AG04450 (cell line): ENCODE measurements at regions of chr6 and their contacts with region 1.

Region 1: GRCh38 chr6:147371325-147371724 is 137.2 kb upstream of the SAMD5 start:
- DNase-seq: no peak
- H3K4me3 ChIP-seq: no peak overlapping the region
- H3K27ac ChIP-seq: no peak overlapping the region
- H3K27me3 ChIP-seq: no peaks in the 10 kb centered on the region
- CTCF ChIP-seq: no peak

Region 2: DNA sequence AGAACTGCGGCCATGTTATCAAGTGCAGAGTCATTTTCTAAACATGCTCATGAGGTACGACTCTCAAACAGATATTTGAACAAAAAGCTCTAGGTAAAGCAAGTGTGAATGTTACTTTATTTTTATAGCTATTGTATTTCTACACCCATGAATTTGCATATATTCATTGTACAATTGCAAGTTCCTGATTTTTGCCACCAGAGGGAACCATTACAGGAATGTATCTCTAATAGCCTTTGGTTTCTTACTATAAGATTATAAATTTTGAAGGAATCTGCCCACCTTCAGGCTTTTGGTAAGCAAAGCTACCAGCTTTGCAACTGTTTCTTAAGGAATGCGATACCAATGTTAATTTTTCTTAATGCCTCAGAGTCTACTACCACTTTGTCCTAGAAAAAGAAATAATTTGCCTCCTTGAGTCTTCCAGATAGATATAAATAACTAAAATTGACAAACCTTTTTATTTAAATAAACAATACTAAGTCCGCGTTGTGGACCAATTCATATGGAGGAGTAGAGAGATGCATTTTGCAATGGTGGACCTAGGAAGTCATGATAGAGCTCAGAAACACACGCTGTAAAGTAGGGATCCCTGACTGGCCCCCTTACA is 11.7 kb after region 1 on chr6:
- CTCF ChIA-PET with region 1: interaction called, 45 read pairs
- POLR2A ChIA-PET with region 1: no interaction called
- DNase-seq: no peak
- H3K4me3 ChIP-seq: no peak overlapping the region
- H3K27ac ChIP-seq: no peak overlapping the region
- H3K27me3 ChIP-seq: no peaks in the 10 kb centered on the region
- CTCF ChIP-seq: peak; percentile 56

Region 3: DNA sequence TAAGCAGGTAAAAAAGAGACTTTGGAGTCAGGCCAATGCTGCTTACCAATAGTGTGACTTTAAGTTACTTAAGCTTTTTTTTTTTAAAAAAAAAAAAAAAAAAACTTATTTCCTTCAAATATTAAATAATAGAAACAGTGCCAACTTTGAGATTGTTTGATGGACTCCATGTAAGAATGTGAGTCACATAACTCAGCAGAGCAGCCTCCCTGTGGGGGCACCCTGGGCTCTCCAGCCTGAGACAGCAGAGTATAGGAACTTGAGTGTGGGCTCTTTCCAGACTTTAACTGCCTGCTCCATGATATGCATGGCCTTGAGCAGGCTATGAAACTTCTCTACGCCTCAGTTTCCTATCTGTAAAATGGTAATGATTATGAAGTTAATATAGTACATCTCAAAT is 23.8 kb after region 1 on chr6:
- CTCF ChIA-PET with region 1: no interaction called
- POLR2A ChIA-PET with region 1: no interaction called
- DNase-seq: no peak
- H3K4me3 ChIP-seq: no peak overlapping the region
- H3K27ac ChIP-seq: no peak overlapping the region
- H3K27me3 ChIP-seq: no peaks in the 10 kb centered on the region
- CTCF ChIP-seq: no peak